Activated naive CD4-positive, alpha-beta T cell treated with anti-CD3 and anti-CD28 coated beads for 36 hours (primary cell): ENCODE measurements at regions of chr2 and their contacts with region 1.

Region 1: DNA sequence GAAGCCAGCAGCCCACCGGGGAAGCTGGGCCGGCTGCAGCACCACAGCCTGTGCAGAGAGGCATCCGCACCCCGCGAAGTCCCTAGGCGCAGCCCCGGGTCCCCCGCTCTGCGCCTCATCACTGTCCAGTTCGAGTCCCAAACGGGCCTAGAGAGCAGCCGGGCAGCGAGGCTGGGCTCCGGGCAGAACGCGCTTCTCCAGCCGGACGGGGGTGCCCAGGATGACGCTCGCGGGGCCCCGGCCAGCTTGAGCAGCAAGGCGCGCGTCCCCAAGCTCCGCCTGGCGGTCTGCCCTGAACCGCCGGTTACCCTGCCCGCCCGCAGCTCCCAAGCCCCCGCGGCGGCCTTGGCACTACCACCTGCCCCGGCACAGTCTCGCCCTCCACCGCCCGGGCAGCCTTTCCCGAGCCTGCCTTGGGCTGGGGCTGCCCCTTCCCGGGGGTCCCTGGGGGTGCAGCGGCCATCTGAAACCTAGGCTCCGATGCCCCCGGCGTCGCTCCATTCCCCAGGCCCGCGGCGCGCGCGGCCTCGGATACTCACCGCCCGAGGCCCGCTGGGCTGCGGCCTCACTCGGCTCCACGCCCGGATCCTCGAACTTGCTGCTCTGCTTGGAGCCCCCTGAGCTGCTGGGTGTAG is 591 bp downstream of the SLC16A14 start:
- DNase-seq: peak; percentile 57
- H3K4me3 Mint-ChIP-seq: peak overlapping the region; percentile 81
- H3K27ac Mint-ChIP-seq: no peak overlapping the region
- H3K4me1 Mint-ChIP-seq: peaks cover 11% of the 10 kb centered on the region
- H3K27me3 Mint-ChIP-seq: peaks cover 12% of the 10 kb centered on the region

Region 2: DNA sequence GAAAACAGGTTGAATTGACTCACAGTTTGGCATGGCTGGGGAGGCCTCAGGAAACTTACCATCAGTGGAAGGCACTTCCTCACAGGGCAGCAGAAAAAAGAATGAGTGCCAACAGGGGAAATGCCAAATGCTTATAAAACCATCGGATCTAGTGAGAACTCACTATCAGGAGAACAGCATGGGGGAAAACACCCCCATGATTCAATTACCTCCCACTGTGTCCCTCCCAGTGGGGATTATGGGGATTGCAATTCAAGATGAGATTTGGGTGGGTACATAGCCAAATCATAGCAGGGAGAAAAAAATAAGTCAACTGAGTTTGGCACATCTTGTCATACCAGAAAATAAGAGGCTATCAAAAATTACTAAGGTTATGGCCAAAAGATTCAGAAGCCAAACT is 242.7 kb before region 1 on chr2:
- CTCF ChIA-PET with region 1: no interaction called
- intact Hi-C with region 1: loop called (anchors 5 kb)
- DNase-seq: no peak
- H3K4me3 Mint-ChIP-seq: no peak overlapping the region
- H3K27ac Mint-ChIP-seq: no peak overlapping the region
- H3K4me1 Mint-ChIP-seq: peaks cover 21% of the 10 kb centered on the region
- H3K27me3 Mint-ChIP-seq: no peaks in the 10 kb centered on the region

Region 3: DNA sequence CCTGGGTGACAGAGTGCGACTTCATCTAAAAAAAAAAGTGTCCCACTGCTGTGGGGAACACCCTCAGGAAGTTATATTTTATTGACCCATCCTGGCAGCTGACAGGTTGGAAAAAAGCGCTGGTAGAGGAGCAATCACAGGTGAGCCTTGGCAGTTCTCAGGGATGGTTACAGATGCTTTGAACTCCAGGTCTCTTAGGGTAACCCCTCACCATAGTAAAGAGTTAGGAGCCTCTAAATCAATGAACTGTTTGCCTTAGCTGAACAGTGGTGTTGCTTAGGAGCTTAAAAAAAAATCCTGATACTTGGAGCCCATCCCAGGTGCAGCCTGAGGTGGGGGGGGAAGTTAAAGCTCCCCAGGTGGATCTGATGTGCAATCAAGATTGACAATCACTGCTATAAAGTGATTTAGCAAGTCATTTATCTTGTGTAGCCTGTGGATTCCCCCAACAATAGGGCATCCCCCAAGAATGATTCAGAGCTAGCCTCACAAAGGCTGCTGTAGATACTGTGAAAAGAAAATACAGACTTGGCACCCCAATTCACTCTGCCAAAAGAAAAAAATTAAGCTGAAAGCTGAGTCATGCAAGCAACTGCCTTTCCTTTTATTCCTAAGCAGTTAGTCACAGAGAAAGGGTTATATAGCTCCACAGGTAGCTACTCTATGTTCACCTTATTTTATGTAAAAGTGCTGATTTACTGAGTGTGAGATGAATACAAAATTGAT is 14.2 kb before region 1 on chr2:
- CTCF ChIA-PET with region 1: interaction called, 37 read pairs
- intact Hi-C with region 1: loop called (anchors 1 kb)
- DNase-seq: peak; percentile 67
- H3K4me3 Mint-ChIP-seq: no peak overlapping the region
- H3K27ac Mint-ChIP-seq: no peak overlapping the region
- H3K4me1 Mint-ChIP-seq: peaks cover 17% of the 10 kb centered on the region
- H3K27me3 Mint-ChIP-seq: no peaks in the 10 kb centered on the region

Region 4: DNA sequence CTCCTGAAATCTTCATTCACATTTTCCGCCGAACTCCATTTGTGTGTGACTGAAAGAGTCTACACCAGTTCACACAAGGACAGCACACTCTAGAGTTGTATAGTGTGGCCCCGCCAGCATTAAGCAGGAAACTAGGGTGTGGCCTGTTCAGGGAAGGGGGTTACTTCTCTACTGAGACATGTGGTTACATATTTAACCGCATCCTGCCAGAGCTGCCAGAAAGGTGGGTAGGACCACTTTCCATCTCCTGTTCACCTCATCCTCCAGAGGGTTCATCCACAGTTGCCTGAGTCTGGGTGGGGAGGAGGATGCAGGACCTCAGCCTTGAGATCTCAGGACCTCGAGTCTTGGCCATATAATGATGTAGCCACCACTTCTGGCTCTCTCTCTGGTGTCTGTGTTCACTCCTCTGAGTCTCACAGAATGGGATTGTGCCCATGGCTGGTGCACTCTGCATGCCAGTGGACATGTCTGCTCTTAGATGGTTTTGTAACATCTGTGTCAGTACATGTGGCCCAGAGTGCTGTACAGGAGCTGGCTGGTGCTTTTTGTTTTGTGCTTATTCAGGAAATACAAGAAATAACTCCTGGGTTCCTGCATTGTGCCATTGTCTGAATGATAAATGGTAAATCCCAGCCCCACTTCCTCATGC is 251.2 kb after region 1 on chr2:
- CTCF ChIA-PET with region 1: no interaction called
- intact Hi-C with region 1: loop called (anchors 5 kb)
- DNase-seq: peak; percentile 87
- H3K4me3 Mint-ChIP-seq: peak overlapping the region; percentile 55
- H3K27ac Mint-ChIP-seq: peak overlapping the region; percentile 93
- H3K4me1 Mint-ChIP-seq: peaks cover 54% of the 10 kb centered on the region
- H3K27me3 Mint-ChIP-seq: no peaks in the 10 kb centered on the region

Region 5: DNA sequence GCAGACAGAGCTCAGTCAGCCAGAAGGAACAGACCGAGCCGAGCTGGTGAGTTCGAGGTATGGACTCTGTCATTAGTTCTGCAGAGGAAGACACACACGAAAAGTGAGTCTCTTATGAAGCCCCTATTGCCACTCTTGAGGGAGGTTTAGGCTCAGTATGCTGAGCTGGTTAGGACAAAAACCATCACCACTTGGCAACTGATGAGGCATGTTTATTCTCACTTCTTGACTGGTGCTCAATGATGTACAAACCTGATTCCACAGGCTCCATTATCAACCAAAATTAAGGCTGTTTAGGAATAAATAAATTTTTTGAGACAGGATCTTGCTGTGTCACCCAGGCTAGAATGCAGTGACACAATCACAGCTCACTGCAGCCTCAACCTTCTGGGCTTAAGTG is 443.4 kb after region 1 on chr2:
- CTCF ChIA-PET with region 1: no interaction called
- intact Hi-C with region 1: no loop called
- DNase-seq: no peak
- H3K4me3 Mint-ChIP-seq: no peak overlapping the region
- H3K27ac Mint-ChIP-seq: no peak overlapping the region
- H3K4me1 Mint-ChIP-seq: no peaks in the 10 kb centered on the region
- H3K27me3 Mint-ChIP-seq: no peaks in the 10 kb centered on the region

Region 6: DNA sequence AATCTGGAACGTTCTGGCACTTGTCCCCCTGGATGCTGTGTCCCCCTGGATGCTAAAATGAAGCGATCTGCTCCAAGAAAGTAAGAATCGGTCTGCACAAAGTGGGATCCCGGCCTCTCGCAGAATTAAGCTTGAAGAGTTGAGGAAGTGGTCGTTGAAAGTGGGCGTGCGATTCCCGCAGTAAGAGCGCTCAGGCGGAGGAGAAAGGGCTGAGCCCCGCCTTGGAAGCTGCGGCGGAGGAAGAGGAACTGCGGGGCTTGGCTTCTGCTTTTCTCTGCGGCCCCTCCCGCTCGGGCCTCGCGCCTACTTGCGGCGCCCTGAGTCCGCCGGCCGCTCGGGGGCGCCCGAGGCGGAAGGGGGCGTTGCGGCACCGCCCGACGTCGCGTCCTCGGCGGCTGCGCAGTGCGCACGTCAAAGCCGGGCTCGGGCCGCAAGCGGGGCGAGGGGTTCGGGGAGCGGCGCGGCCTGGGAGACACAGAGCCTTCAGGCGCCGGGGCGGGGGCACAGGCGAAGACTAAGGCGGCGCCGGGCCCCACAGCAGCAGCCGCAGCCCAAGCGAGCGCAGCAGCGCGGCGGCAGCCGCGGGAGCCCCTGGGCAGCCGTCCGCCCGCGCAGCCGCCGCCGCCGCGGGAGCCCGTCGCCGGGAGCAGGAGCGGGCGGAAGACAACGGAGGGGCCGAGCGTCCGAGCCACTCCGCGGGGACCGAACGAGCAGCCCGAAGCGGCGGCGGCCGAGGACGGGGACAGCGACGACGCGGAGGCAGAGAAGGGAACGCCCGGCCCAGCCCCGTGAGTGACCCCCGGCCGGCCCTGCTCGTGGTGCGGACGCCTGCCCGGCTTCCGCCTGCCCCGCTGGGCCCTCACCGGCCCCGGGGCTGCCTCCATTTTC is 644.6 kb after region 1 on chr2 and contains the start of gene CAB39:
- CTCF ChIA-PET with region 1: interaction called, 4 read pairs
- intact Hi-C with region 1: loop called (anchors 5 kb)
- DNase-seq: peak; percentile 84
- H3K4me3 Mint-ChIP-seq: peak within 1 kb of the TSS; percentile 90
- H3K27ac Mint-ChIP-seq: peak within 1 kb of the TSS; percentile 94
- H3K4me1 Mint-ChIP-seq: peaks cover 40% of the 10 kb centered on the region
- H3K27me3 Mint-ChIP-seq: no peaks in the 10 kb centered on the region
- total RNA-seq, gene CAB39: 86.6 to 97.5 TPM

Region 7: DNA sequence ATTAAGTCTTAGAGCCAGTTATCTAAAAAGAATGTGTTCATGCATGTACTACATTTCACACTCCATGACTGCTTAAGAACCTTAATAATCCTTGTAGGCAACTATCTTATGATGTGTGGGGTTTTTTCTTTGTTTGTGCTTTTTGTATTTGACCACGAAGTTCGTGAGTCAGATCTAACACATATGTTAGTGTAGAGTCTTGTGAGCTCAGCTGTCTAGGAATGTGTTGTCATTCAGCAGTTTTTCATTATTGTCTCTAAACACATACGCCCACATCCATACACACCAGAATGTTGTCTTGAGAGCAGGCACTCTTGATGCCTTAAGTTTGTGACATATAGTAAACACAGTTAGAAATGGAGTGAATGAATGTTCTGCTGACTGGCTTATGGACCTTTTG is 682.9 kb after region 1 on chr2:
- CTCF ChIA-PET with region 1: no interaction called
- intact Hi-C with region 1: no loop called
- DNase-seq: peak; percentile 12
- H3K4me3 Mint-ChIP-seq: no peak overlapping the region
- H3K27ac Mint-ChIP-seq: no peak overlapping the region
- H3K4me1 Mint-ChIP-seq: peaks cover 76% of the 10 kb centered on the region
- H3K27me3 Mint-ChIP-seq: no peaks in the 10 kb centered on the region